Cardiac septum (tissue), 1 donor: ENCODE measurements at regions of chr6 and their contacts with region 1.

Region 1: DNA sequence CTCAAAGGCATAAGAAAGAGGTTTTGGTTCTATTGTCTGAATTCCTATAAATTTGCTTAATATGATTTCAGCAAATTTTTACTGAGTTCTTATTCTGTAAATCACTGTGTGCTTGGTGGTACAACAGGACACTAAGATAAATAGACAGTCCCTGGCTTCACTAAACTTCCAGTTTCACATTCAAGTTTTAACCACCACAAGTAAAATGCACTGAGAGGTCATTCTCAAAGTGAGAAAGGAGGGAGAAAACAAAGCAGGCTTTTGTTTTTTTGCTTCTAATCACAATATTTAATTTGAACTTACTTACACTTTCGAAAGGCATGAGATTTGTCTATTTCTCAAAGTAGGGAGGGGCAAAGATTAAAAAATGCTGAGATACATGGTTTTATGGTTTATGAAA is 445.7 kb downstream of the CDC5L start:
- DNase-seq: no peak

Region 2: DNA sequence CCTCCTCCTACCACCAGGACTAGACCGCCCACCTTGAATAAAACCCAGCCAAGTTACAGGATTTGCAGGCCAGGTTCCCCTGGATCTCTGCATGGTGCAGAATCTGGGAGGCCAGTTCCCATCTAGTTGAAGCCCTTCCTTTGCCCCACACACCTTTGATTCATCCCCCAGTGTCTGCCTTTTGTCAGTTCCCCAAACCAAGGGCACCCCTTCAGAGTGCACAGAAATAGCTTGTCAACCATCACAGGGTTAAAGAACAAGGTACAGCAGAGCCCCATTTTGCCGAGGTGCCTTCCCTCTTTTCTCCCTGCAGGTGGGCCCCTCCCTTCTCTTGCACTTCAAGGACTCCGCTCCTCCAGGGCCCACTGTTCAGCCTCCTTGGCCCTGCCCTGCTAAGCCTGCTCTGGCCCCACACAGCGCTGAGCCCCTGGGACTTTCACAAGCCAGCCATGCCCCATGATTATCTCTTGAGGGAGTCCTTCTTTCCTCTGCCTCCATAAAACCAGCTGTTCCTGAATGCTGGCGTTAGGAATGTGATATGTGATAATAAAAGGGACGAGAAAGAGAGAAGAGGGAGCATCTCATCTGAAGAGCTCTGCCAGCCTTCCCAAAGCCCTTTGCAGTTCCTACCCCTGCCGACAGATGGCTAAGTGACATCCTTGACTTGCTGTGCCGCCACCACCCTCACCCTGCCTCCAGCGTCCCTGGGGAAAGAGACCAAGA is 165.4 kb before region 1 on chr6:
- intact Hi-C with region 1: loop called (anchors 10 kb)
- DNase-seq: no peak

Region 3: GRCh38 chr6:45075246-45075645 is 242.0 kb after region 1 on chr6:
- intact Hi-C with region 1: no loop called
- DNase-seq: no peak

Region 4: DNA sequence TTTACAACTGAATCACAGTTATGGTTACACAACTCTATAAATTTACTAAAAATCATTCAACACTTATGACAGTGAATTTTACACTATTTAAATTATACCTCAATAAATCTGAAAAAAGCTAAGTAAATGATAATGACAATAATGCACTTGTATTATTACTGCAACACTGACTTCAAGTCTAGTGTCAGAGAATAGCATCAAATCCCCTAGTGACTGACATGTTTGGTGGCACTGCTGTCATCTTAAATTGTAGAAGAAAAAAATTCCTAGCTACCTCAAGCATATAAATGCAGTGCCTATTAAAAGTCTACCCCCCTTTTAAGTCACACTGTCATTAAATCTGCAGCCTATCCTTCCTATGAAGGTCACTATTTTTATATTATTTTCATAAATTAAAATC is 305.5 kb after region 1 on chr6:
- intact Hi-C with region 1: no loop called
- DNase-seq: no peak